Activated CD8-positive, alpha-beta T cell treated with anti-CD3 and anti-CD28 coated beads, Interleukin-2, amount 10 ng/mL, durations not matched to agents 7 days and 5 days (primary cell): ENCODE measurements at regions of chr1 and their contacts with region 1.

Region 1: GRCh38 chr1:19179597-19180264 is 30.3 kb downstream of the UBR4 start:
- DNase-seq: peak; percentile 64
- ATAC-seq: peak; percentile 83
- H3K4me3 Mint-ChIP-seq: no peak overlapping the region
- H3K27ac Mint-ChIP-seq: peak overlapping the region; percentile 86
- H3K4me1 Mint-ChIP-seq: peaks cover 28% of the 10 kb centered on the region
- H3K27me3 Mint-ChIP-seq: no peaks in the 10 kb centered on the region

Region 2: DNA sequence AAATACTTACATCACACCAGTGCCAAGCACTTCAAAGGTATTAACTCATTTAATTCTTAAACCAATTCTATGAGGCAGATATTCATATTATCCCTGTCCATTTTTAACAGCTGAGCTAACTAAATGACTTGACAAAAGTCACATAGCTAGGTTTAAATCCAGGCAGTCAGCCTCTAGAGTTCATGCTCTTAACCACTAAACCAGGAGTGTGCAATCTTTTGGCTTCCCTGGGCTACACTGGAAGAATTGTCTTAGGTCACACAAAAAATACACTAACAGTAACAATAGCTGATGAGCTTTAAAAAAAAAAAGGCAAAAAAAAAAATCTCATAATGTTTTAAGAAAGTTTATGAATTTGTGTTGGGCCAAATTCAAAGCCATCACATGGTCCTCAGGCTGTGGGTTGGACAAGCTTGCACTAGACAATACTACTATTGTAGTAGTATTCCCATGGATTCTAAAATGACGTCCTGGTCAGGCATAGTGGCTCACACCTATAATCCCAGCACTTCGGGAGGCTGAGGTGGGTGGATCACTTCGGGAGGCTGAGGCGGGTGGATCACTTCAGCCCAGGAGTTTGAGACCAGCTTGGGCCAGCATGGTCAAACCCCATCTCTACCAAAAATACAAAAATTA is 20.4 kb after region 1 on chr1:
- CTCF ChIA-PET with region 1: interaction called, 10 read pairs
- POLR2A ChIA-PET with region 1: no interaction called
- DNase-seq: no peak
- ATAC-seq: no peak
- H3K4me3 Mint-ChIP-seq: no peak overlapping the region
- H3K27ac Mint-ChIP-seq: no peak overlapping the region
- H3K4me1 Mint-ChIP-seq: peaks cover 23% of the 10 kb centered on the region
- H3K27me3 Mint-ChIP-seq: no peaks in the 10 kb centered on the region